ENCODE measurements at regions of chr6 and their contacts with region 1.

Region 1: GRCh38 chr6:74075323-74075722 is 379.3 kb downstream of the CD109 start:
- DNase-seq: peak in 4 of 5 donors; percentile 35 to 47 (median 42)
- ATAC-seq: peak in 3 of 4 donors; percentile 78 to 86 (median 82)
- H3K4me3 ChIP-seq: no peak overlapping the region
- H3K27ac ChIP-seq: peak overlapping the region in 6 of 12 donors; percentile 25 to 64 (median 47)
- H3K4me1 ChIP-seq: peaks cover 0 to 6% (median 0%) of the 10 kb centered on the region in 12 donors
- H3K27me3 ChIP-seq: no peaks in the 10 kb centered on the region
- CTCF ChIP-seq: no peak
- POLR2A ChIP-seq: no peak

Region 2: DNA sequence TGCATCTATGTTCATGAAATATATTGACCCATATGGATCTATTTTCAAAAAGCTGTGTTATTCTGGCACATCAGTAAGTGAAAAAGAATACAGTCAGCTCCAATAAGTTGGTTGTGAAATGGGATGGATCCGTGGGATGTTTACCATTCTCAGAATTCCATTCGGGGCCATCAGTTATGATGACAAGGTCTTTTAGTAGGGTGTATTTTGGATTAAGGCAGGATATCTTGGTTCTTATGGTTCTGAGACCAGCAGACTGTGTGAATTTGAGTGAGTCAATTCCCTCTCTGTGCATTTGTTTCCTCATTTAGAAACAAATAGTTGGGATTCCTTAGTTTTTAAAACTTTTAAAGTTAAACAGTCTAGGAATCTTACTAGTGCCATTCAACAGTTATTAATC is 92.0 kb before region 1 on chr6:
- intact Hi-C with region 1: loop called in 1 of 10 experiments (anchors 5 kb)
- DNase-seq: no peak
- ATAC-seq: no peak
- H3K4me3 ChIP-seq: no peak overlapping the region
- H3K27ac ChIP-seq: no peak overlapping the region
- H3K4me1 ChIP-seq: no peaks in the 10 kb centered on the region
- H3K27me3 ChIP-seq: no peaks in the 10 kb centered on the region
- CTCF ChIP-seq: no peak
- POLR2A ChIP-seq: no peak

Region 3: GRCh38 chr6:74114428-74114827 is 39.1 kb after region 1 on chr6:
- intact Hi-C with region 1: no loop called
- DNase-seq: no peak
- ATAC-seq: no peak
- H3K4me3 ChIP-seq: no peak overlapping the region
- H3K27ac ChIP-seq: no peak overlapping the region
- H3K4me1 ChIP-seq: no peaks in the 10 kb centered on the region
- H3K27me3 ChIP-seq: no peaks in the 10 kb centered on the region
- CTCF ChIP-seq: no peak
- POLR2A ChIP-seq: no peak

Measured in heart left ventricle (tissue), 16 donors.